ENCODE measurements at regions of chr14 and their contacts with region 1.

Region 1: GRCh38 chr14:20454516-20455354 is at the starts of genes APEX1 and OSGEP:
- DNase-seq: peak; percentile 94 to 100
- ATAC-seq: peak; percentile 87 to 92 (median 88)
- H3K4me3 ChIP-seq: peak within 1 kb of the TSS; percentile 79
- H3K4me3 Mint-ChIP-seq: no peak within 1 kb of the TSS
- H3K27ac ChIP-seq: peak within 1 kb of the TSS; percentile 89
- H3K27ac Mint-ChIP-seq: no peak within 1 kb of the TSS
- H3K4me1 ChIP-seq: peaks cover 27% of the 10 kb centered on the region
- H3K4me1 Mint-ChIP-seq: peaks cover 2 to 23% of the 10 kb centered on the region in 2 donors
- H3K27me3 ChIP-seq: no peaks in the 10 kb centered on the region
- H3K27me3 Mint-ChIP-seq: no peaks in the 10 kb centered on the region
- CTCF ChIP-seq: no peak
- total RNA-seq, gene APEX1: 66.0 to 77.6 (median 74.9) TPM
- total RNA-seq, gene OSGEP: 60.1 to 65.4 (median 63.3) TPM

Region 2: DNA sequence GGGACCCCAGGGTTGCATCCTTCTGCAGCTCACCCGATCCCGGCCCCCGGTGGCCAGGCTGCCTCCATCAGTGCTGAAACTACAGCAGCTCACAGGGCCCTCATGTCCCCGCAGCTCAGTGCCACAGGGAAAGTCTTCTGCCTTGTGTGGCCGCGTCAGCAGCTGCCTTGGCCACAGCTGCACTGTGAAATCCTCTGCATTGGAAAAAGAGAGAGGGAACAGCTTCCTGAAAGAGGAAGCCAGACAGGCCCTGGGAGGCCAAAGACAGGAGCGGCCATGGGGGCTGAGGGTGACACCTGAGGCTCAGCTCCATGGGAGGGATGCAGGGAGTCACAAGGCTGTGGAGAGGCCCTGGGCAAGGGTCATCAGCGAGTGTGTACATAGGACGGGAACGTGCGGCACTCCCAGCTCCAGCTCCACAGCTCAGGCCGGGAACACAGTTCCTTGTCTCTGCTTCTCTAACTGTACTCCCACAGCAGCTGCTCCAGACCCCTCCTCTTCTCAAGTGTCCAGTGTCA is 78.6 kb before region 1 on chr14:
- intact Hi-C with region 1: no loop called
- DNase-seq: no peak
- ATAC-seq: no peak
- H3K4me3 ChIP-seq: no peak overlapping the region
- H3K4me3 Mint-ChIP-seq: no peak overlapping the region
- H3K27ac ChIP-seq: no peak overlapping the region
- H3K27ac Mint-ChIP-seq: peak overlapping the region; percentile 48 to 60
- H3K4me1 ChIP-seq: no peaks in the 10 kb centered on the region
- H3K4me1 Mint-ChIP-seq: no peaks in the 10 kb centered on the region
- H3K27me3 ChIP-seq: no peaks in the 10 kb centered on the region
- H3K27me3 Mint-ChIP-seq: no peaks in the 10 kb centered on the region
- CTCF ChIP-seq: no peak

Region 3: GRCh38 chr14:20400965-20401593 is 53.7 kb before region 1 on chr14:
- intact Hi-C with region 1: no loop called
- DNase-seq: no peak
- ATAC-seq: no peak
- H3K4me3 ChIP-seq: no peak overlapping the region
- H3K4me3 Mint-ChIP-seq: no peak overlapping the region
- H3K27ac ChIP-seq: no peak overlapping the region
- H3K27ac Mint-ChIP-seq: no peak overlapping the region
- H3K4me1 ChIP-seq: no peaks in the 10 kb centered on the region
- H3K4me1 Mint-ChIP-seq: peaks cover 12 to 13% of the 10 kb centered on the region in 2 donors
- H3K27me3 ChIP-seq: no peaks in the 10 kb centered on the region
- H3K27me3 Mint-ChIP-seq: no peaks in the 10 kb centered on the region
- CTCF ChIP-seq: no peak

Region 4: GRCh38 chr14:20413045-20413799 is 41.5 kb before region 1 on chr14 and contains the start of gene TEP1:
- intact Hi-C with region 1: loop called (anchors 2 kb)
- DNase-seq: peak; percentile 64 to 82
- ATAC-seq: peak; percentile 73 to 82 (median 76)
- H3K4me3 ChIP-seq: peak within 1 kb of the TSS; percentile 97
- H3K4me3 Mint-ChIP-seq: peak within 1 kb of the TSS; percentile 98
- H3K27ac ChIP-seq: peak within 1 kb of the TSS; percentile 94
- H3K27ac Mint-ChIP-seq: peak within 1 kb of the TSS; percentile 91 to 96
- H3K4me1 ChIP-seq: peaks cover 9% of the 10 kb centered on the region
- H3K4me1 Mint-ChIP-seq: peaks cover 35 to 53% of the 10 kb centered on the region in 2 donors
- H3K27me3 ChIP-seq: no peaks in the 10 kb centered on the region
- H3K27me3 Mint-ChIP-seq: no peaks in the 10 kb centered on the region
- CTCF ChIP-seq: no peak
- total RNA-seq, gene TEP1: 76.3 to 83.2 (median 80.8) TPM

Region 5: GRCh38 chr14:20434701-20435581 is 19.8 kb before region 1 on chr14:
- intact Hi-C with region 1: no loop called
- DNase-seq: no peak
- ATAC-seq: no peak
- H3K4me3 ChIP-seq: no peak overlapping the region
- H3K4me3 Mint-ChIP-seq: no peak overlapping the region
- H3K27ac ChIP-seq: no peak overlapping the region
- H3K27ac Mint-ChIP-seq: no peak overlapping the region
- H3K4me1 ChIP-seq: peaks cover 22% of the 10 kb centered on the region
- H3K4me1 Mint-ChIP-seq: peaks cover 0 to under 1% of the 10 kb centered on the region in 2 donors
- H3K27me3 ChIP-seq: no peaks in the 10 kb centered on the region
- H3K27me3 Mint-ChIP-seq: no peaks in the 10 kb centered on the region
- CTCF ChIP-seq: no peak

Region 6: GRCh38 chr14:20469242-20469889 is 14.6 kb after region 1 on chr14 and contains the start of gene PNP:
- intact Hi-C with region 1: loop called (anchors 2 kb)
- DNase-seq: peak; percentile 70 to 94
- ATAC-seq: peak; percentile 78 to 90 (median 87)
- H3K4me3 ChIP-seq: peak within 1 kb of the TSS; percentile 91
- H3K4me3 Mint-ChIP-seq: peak within 1 kb of the TSS; percentile 99
- H3K27ac ChIP-seq: peak within 1 kb of the TSS; percentile 73
- H3K27ac Mint-ChIP-seq: peak within 1 kb of the TSS; percentile 88 to 98
- H3K4me1 ChIP-seq: peaks cover 29% of the 10 kb centered on the region
- H3K4me1 Mint-ChIP-seq: peaks cover 35 to 38% of the 10 kb centered on the region in 2 donors
- H3K27me3 ChIP-seq: no peaks in the 10 kb centered on the region
- H3K27me3 Mint-ChIP-seq: no peaks in the 10 kb centered on the region
- CTCF ChIP-seq: no peak
- total RNA-seq, gene PNP: 49.5 to 76.8 (median 51.8) TPM

Region 7: DNA sequence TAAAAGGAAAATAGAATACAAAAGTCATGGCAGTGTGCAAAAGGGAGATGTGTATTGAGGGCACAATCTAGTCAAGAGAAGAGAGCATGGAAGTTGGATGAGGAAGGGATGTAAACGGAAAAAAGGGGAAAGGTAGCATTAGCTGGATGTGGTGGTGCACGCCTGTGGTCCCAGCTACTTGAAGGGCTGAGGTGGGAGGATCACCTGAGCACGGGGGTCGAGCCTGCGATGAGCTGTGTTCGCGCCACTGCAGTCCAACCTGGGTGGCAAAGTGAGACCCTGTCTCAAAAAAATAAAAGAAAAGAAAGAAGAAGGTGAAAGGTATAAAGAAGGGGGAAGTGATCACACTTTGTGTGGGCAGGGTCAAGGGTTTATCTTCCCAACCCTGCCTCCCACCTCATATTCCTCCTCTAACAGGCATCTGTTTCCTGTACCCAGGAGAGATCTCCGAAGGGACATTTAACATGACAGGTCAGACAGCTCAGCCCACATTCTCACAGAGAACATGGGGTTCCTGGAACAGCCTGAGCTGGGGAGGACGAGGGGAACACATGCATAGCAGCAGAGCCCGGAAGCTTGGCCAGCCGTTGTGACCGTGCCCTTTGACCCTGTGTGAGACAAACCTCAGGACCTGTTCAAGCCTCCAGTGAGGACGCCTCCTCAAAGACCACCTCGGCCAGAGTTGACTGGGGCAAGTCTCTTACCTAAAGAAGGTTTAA is 124.2 kb after region 1 on chr14:
- intact Hi-C with region 1: no loop called
- DNase-seq: no peak
- ATAC-seq: no peak
- H3K4me3 ChIP-seq: no peak overlapping the region
- H3K4me3 Mint-ChIP-seq: no peak overlapping the region
- H3K27ac ChIP-seq: no peak overlapping the region
- H3K27ac Mint-ChIP-seq: no peak overlapping the region
- H3K4me1 ChIP-seq: no peaks in the 10 kb centered on the region
- H3K4me1 Mint-ChIP-seq: no peaks in the 10 kb centered on the region
- H3K27me3 ChIP-seq: no peaks in the 10 kb centered on the region
- H3K27me3 Mint-ChIP-seq: peaks cover 4 to 13% of the 10 kb centered on the region in 2 donors
- CTCF ChIP-seq: no peak